ENCODE measurements at regions of chr3 and their contacts with region 1.

Region 1: GRCh38 chr3:183692436-183692835 is 5.2 kb upstream of the YEATS2 start:
- DNase-seq: no peak
- H3K4me3 ChIP-seq: no peak overlapping the region
- H3K27ac ChIP-seq: no peak overlapping the region
- H3K4me1 ChIP-seq: peaks cover 0 to 3% (median 0%) of the 10 kb centered on the region in 4 donors
- H3K27me3 ChIP-seq: no peaks in the 10 kb centered on the region
- CTCF ChIP-seq: no peak

Region 2: GRCh38 chr3:183490670-183491069 is 201.8 kb before region 1 on chr3:
- intact Hi-C with region 1: no loop called
- DNase-seq: no peak
- H3K4me3 ChIP-seq: no peak overlapping the region
- H3K27ac ChIP-seq: no peak overlapping the region
- H3K4me1 ChIP-seq: no peaks in the 10 kb centered on the region
- H3K27me3 ChIP-seq: no peaks in the 10 kb centered on the region
- CTCF ChIP-seq: no peak

Region 3: GRCh38 chr3:183629546-183630301 is 62.7 kb before region 1 on chr3:
- intact Hi-C with region 1: loop called (anchors 5 kb)
- DNase-seq: no peak
- H3K4me3 ChIP-seq: no peak overlapping the region
- H3K27ac ChIP-seq: no peak overlapping the region
- H3K4me1 ChIP-seq: peaks cover 0 to 16% (median 7%) of the 10 kb centered on the region in 4 donors
- H3K27me3 ChIP-seq: no peaks in the 10 kb centered on the region
- CTCF ChIP-seq: no peak

Region 4: GRCh38 chr3:183662099-183662498 is 30.3 kb before region 1 on chr3:
- intact Hi-C with region 1: no loop called
- DNase-seq: no peak
- H3K4me3 ChIP-seq: no peak overlapping the region
- H3K27ac ChIP-seq: no peak overlapping the region
- H3K4me1 ChIP-seq: peaks cover 0 to 30% (median 0%) of the 10 kb centered on the region in 4 donors
- H3K27me3 ChIP-seq: no peaks in the 10 kb centered on the region
- CTCF ChIP-seq: no peak

Region 5: GRCh38 chr3:183725387-183725786 is 33.0 kb after region 1 on chr3:
- intact Hi-C with region 1: no loop called
- DNase-seq: no peak
- H3K4me3 ChIP-seq: no peak overlapping the region
- H3K27ac ChIP-seq: no peak overlapping the region
- H3K4me1 ChIP-seq: no peaks in the 10 kb centered on the region
- H3K27me3 ChIP-seq: no peaks in the 10 kb centered on the region
- CTCF ChIP-seq: no peak

Region 6: DNA sequence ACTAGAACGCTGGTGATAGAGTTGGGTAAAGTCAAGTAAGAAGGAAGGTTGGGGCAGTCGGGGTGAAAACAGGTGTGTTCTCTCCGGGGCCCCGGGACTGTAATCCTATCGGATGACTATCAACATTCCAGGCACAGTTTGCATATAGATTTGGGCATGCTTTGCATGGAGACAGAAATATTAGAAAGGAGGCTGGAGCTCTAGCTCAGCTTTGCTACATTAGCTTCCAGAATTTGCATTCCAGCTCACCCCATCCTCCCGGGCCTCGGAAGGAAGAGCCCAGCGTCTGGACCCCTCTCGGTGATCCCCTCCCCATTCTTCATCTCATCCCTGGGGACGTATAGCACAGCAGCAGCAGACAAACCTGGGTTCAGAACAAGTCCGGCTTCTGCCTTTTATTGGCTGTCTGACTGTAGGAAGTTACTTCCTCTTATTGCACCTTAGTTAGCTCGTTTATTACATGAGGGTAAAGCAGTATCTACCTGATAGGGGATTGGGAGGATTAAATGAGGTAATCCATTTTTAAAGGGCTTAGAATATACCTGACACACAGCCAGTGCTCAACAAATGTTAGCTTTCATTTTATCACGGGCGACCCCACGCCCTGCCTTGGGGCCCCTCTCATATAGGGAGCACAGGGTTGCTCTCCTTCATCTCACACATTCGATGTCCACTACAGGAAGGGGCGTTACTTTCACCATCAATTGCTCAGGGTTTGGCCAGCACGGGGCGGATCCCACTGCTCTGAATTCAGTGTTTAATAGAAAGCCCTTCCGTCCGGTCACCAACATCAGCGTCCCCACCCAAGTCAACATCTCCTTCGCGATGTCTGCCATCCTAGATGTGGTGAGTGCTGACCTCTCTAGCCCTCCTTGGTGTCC is 407.6 kb after region 1 on chr3:
- intact Hi-C with region 1: no loop called
- DNase-seq: no peak
- H3K4me3 ChIP-seq: no peak overlapping the region
- H3K27ac ChIP-seq: no peak overlapping the region
- H3K4me1 ChIP-seq: no peaks in the 10 kb centered on the region
- H3K27me3 ChIP-seq: peaks cover 0 to 10% of the 10 kb centered on the region in 2 donors
- CTCF ChIP-seq: no peak